CD4-positive, alpha-beta T cell (primary cell): ENCODE measurements at regions of chr5 and their contacts with region 1.

Region 1: DNA sequence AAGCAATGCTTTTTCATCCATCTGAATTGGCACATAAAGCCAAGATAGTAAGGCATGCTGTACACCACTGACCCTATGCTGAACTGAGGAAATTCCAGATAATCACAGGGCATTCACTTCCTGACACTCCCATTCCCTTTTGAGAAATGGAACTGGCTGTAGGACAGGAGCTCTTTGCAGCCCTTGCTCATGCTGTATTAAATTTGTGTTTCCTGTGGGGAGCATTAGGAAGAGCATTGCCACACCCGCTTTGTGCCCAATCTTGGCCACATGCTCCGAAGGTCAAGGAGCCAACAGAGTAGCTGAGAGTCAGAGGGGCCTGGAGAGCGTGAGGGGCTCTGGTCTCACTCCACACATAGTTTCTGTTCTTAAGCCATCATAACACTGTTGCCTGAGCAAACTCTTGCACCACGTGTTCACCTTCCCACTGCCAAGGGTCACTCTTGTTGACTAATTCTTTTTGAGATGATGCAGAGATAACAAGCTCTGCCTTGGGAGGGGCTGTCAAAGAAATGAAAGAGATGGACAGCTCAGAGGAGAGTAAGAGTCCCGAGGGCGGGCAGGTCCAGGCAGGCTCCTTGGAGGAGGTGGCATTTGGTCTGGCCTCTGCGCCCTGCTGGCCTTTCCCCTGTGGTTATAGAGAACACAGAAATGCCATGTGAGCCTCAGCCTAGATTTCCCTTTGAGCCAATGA is 31.7 kb upstream of the ARAP3 start:
- DNase-seq: no peak
- ATAC-seq: no peak
- H3K4me3 ChIP-seq: no peak overlapping the region
- H3K4me3 Mint-ChIP-seq: no peak overlapping the region
- H3K27ac ChIP-seq: no peak overlapping the region
- H3K27ac Mint-ChIP-seq: no peak overlapping the region
- H3K4me1 ChIP-seq: no peaks in the 10 kb centered on the region
- H3K4me1 Mint-ChIP-seq: no peaks in the 10 kb centered on the region
- H3K27me3 ChIP-seq: peaks cover 7 to 10% of the 10 kb centered on the region in 2 experiments
- H3K27me3 Mint-ChIP-seq: peaks cover 12% of the 10 kb centered on the region
- CTCF ChIP-seq: no peak

Region 2: GRCh38 chr5:141734501-141735230 is 20.9 kb after region 1 on chr5:
- CTCF ChIA-PET with region 1: no interaction called
- POLR2A ChIA-PET with region 1: no interaction called
- intact Hi-C with region 1: no loop called
- DNase-seq: peak in 11 of 14 experiments; percentile 2 to 49 (median 14)
- ATAC-seq: no peak
- H3K4me3 ChIP-seq: no peak overlapping the region
- H3K4me3 Mint-ChIP-seq: no peak overlapping the region
- H3K27ac ChIP-seq: no peak overlapping the region
- H3K27ac Mint-ChIP-seq: no peak overlapping the region
- H3K4me1 ChIP-seq: no peaks in the 10 kb centered on the region
- H3K4me1 Mint-ChIP-seq: no peaks in the 10 kb centered on the region
- H3K27me3 ChIP-seq: peaks cover 6% of the 10 kb centered on the region in 2 experiments
- H3K27me3 Mint-ChIP-seq: peaks cover 60% of the 10 kb centered on the region
- CTCF ChIP-seq: no peak

Region 3: GRCh38 chr5:141821361-141821925 is 107.7 kb after region 1 on chr5:
- CTCF ChIA-PET with region 1: no interaction called
- POLR2A ChIA-PET with region 1: no interaction called
- intact Hi-C with region 1: loop called in 1 of 2 experiments (anchors 5 kb)
- DNase-seq: no peak
- ATAC-seq: no peak
- H3K4me3 ChIP-seq: no peak overlapping the region
- H3K4me3 Mint-ChIP-seq: no peak overlapping the region
- H3K27ac ChIP-seq: no peak overlapping the region
- H3K27ac Mint-ChIP-seq: no peak overlapping the region
- H3K4me1 ChIP-seq: no peaks in the 10 kb centered on the region
- H3K4me1 Mint-ChIP-seq: no peaks in the 10 kb centered on the region
- H3K27me3 ChIP-seq: peaks cover 6 to 9% of the 10 kb centered on the region in 2 experiments
- H3K27me3 Mint-ChIP-seq: peaks cover 19% of the 10 kb centered on the region
- CTCF ChIP-seq: no peak

Region 4: DNA sequence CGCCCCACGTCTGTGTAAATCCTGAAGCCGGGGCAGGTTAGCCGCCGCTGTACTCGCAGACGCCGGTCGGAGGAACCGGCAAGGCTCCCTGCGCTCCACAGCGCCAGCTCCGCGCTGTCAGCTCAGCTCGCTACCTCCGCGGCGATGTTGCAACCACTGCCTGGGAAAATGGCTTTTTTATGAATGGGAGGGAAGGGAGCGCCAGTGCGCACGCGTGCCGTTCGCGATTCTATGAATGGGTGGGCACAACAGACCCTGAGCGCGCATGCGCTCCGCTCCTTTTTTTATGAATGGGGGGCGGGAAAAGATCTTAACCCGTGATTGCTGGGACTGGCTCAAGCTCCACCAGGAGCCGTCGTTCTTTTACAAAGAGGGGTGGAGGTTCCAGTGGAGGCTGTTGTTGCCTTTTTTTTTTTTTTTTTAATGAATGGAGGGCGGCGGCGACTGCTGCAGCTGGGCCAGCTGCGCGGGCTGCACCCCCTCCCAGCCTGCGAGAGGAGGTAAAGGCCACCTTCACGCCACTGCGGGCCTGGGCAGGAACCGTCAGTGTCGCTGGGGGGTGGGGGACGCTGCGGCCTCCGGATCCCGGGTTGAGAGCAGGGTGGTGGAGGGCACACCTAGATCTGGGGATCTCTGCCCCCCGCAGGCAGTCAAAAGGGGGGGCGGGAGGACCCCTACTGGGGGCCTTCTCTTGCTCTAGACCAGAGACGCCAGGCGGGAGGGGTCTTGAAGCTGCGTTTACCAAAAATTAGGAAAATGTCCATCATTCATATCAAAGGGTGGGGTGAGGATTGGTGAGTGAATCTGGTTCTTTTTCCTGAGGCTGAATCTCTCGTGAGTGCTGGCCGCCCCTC is 611.3 kb after region 1 on chr5 and contains the start of gene SPRY4:
- CTCF ChIA-PET with region 1: no interaction called
- POLR2A ChIA-PET with region 1: no interaction called
- intact Hi-C with region 1: no loop called
- DNase-seq: peak; percentile 51 to 86 (median 74)
- ATAC-seq: peak; percentile 81
- H3K4me3 ChIP-seq: peak within 1 kb of the TSS; percentile 61
- H3K4me3 Mint-ChIP-seq: peak within 1 kb of the TSS; percentile 87
- H3K27ac ChIP-seq: no peak within 1 kb of the TSS
- H3K27ac Mint-ChIP-seq: no peak within 1 kb of the TSS
- H3K4me1 ChIP-seq: peaks cover 33% of the 10 kb centered on the region
- H3K4me1 Mint-ChIP-seq: peaks cover 49% of the 10 kb centered on the region
- H3K27me3 ChIP-seq: peaks cover 54 to 58% of the 10 kb centered on the region in 2 experiments
- H3K27me3 Mint-ChIP-seq: peaks cover 81% of the 10 kb centered on the region
- CTCF ChIP-seq: no peak
- total RNA-seq, gene SPRY4: 0.16 to 0.34 TPM